Activated CD4-positive, alpha-beta T cell treated with anti-CD3 and anti-CD28 coated beads, Interleukin-2, amount 10 ng/mL, durations not matched to agents 24 days and 14 days (primary cell): ENCODE measurements at regions of chr16 and their contacts with region 1.

Region 1: GRCh38 chr16:74192281-74192797 is 104.3 kb upstream of the PSMD7 start:
- DNase-seq: no peak
- H3K4me3 Mint-ChIP-seq: no peak overlapping the region
- H3K27ac Mint-ChIP-seq: no peak overlapping the region
- H3K4me1 Mint-ChIP-seq: no peaks in the 10 kb centered on the region
- H3K27me3 Mint-ChIP-seq: peaks cover 1% of the 10 kb centered on the region

Region 2: DNA sequence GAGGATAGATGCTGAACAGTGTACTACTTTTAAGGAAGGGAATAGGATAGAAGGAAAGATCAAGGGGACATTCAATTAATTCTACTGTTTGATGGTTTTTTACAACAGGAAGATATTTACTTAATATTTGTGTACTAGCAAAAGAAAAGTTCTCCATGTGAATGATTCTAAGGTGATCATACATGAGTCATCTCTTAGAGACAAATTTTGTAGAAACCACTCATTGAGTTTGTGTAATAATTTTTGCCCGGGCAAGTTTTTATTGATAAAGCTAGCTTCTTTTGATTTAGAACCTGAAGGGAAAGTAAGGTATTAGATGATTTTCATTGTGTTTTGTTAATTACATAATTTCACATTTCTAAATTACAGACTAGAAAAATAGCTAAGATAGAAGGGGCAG is 68.5 kb before region 1 on chr16:
- intact Hi-C with region 1: no loop called
- DNase-seq: no peak
- H3K4me3 Mint-ChIP-seq: no peak overlapping the region
- H3K27ac Mint-ChIP-seq: no peak overlapping the region
- H3K4me1 Mint-ChIP-seq: no peaks in the 10 kb centered on the region
- H3K27me3 Mint-ChIP-seq: no peaks in the 10 kb centered on the region

Region 3: DNA sequence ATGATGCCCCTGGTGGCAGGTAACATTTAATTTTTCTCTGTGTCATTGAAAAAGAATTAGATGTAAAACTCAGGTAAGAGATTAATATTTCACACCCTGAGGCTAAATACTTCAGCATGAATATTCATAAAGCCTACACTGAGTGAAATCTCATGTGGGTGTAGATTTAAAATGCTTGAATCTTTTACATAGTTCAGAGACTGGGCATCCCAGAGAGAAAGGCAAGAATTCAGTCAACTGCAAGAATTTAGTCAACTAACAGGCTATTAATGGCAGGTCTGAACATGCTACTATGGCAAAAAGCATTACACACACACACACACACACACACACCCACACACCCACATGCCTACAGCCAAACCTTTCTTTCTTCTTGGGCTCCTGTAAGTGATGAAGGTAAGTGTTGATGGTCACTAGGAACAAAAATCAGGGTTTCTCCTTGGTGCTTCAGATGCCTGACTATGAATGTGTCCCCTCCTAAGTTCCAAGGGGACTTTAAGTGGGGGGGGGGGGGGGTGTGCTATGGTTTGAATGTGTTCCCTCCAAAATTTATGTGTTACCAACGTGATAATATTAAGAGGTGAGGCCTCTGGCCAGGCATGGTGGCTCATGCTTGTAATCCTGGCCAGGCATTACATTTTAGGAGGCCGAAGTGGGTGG is 40.6 kb after region 1 on chr16:
- intact Hi-C with region 1: loop called (anchors 2 kb)
- DNase-seq: no peak
- H3K4me3 Mint-ChIP-seq: no peak overlapping the region
- H3K27ac Mint-ChIP-seq: no peak overlapping the region
- H3K4me1 Mint-ChIP-seq: no peaks in the 10 kb centered on the region
- H3K27me3 Mint-ChIP-seq: peaks cover 7% of the 10 kb centered on the region

Region 4: GRCh38 chr16:74309789-74310781 is 117.7 kb after region 1 on chr16:
- intact Hi-C with region 1: no loop called
- DNase-seq: peak; percentile 74
- H3K4me3 Mint-ChIP-seq: no peak overlapping the region
- H3K27ac Mint-ChIP-seq: no peak overlapping the region
- H3K4me1 Mint-ChIP-seq: no peaks in the 10 kb centered on the region
- H3K27me3 Mint-ChIP-seq: no peaks in the 10 kb centered on the region